Left cardiac atrium (tissue), 4 donors: ENCODE measurements at regions of chr1 and their contacts with region 1.

Region 1: GRCh38 chr1:244272471-244273261 is 179.0 kb downstream of the ADSS2 start:
- DNase-seq: peak; percentile 52
- ATAC-seq: peak; percentile 82

Region 2: DNA sequence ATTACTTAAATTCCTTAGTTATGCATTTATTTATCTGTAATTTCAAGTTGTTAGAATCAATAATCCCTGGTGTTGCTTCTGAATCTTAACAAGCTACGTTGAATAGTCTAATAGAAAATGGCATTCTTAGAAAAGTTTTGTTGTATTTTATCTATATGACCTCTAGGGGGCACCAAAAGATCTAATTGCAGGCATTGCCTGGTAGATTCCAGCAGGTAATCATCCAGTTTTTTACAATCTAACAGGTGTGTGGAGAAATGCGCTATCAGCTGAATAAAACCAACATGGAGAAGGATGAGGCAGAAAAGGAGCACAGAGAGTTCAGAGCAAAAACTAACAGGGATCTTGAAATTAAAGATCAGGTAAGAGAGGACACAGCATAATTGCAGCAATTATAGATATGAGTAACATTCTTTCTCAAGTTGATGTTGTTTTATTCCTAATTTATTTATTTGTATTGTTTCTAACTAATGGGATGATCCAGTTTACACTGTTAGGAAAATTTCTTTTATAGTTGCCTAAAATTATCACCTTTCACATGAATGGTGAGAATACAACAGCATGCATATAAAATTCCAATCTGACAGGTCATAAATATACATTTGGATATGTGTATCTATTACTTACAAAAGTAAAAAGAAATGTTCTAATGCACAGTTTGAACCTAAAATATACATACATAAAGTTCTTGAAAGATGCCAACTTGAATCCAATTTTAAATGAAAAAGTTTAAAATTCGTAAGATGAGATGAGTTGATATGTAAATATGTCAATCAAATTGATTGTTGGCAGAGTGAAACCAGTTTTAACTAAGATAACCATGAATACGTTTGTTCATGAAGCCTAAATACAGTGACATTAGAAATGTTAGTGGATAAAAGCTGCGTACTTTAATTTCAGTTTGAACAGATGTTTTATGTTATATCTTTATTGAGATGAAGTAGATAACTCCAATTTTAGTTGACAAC is 928.4 kb before region 1 on chr1:
- intact Hi-C with region 1: loop called in 1 of 2 experiments (anchors 2 kb)
- DNase-seq: no peak
- ATAC-seq: peak in 1 of 2 donors; percentile 38

Region 3: DNA sequence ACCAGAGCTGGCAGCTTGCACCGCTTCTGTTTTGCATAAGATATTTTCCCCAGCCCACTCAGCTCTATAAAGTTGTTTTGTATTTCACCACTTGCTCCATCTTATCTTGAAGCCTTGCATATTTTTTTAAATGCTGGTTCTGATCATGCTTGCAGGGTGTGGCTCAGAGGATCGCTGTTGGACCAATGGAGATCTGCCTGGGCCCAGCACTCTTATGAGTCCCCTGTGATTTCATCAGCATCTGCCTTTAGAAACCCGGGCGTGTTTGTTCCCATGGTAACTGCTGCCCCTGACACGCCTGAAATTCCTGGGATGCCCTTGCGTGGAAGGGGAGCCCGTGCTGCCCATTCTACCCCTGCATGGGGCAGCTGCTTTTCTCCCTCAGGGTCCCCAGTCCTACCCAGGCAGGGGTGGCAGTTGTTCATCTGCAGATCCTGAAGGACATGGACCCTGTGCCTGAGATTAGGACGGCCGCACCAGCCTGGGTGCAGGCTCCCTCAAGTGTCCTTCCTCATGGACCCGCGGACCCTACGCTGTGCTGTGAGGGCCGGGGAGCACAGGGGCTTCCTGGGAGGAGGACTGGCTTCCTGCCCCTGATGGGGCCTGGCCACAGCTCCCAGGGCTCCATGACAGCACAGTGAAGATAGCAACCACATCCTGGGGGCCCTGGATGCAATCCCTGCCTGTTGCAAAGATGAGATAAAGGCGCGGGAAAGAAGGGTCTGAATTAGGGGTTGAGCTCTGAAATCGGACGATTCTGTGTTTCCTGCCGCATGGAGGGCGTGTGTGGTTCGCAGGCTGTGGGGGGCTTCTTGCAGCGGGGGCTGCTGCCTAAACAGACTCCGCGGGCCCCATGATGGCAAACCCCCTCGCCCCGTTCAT is 790.3 kb before region 1 on chr1:
- intact Hi-C with region 1: loop called in 1 of 2 experiments (anchors 5 kb)
- DNase-seq: no peak
- ATAC-seq: peak; percentile 74 to 83

Region 4: GRCh38 chr1:243708210-243708609 is 564.5 kb before region 1 on chr1:
- intact Hi-C with region 1: loop called in 1 of 2 experiments (anchors 5 kb)
- DNase-seq: no peak
- ATAC-seq: no peak

Region 5: GRCh38 chr1:244047621-244048471 is 224.8 kb before region 1 on chr1:
- intact Hi-C with region 1: loop called in 1 of 2 experiments (anchors 10 kb)
- DNase-seq: peak; percentile 99
- ATAC-seq: peak; percentile 96 to 97